ENCODE measurements at regions of chr1 and their contacts with region 1.

Region 1: DNA sequence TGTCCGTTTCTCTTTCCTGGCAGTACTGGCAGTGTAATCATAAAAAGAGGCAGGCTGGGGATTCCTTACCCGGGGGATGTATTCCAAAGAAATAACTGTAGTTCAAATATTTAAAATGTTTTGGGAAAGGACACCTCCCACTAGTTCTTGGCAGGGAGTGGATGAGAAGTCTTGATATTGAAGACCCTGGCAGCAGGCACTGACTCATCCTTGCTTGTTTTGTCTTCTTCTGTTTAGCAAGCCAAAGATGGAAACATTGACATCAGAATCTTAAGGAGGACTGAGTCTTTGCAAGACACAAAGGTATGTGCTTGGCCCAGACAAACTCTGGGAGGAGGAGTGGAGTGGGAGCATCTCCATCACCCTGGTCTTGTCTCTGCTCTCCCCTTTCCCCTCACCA is 639 bp downstream of the IL20 start:
- DNase-seq: no peak
- H3K4me3 ChIP-seq: no peak overlapping the region
- H3K27ac ChIP-seq: no peak overlapping the region
- H3K4me1 ChIP-seq: no peaks in the 10 kb centered on the region
- H3K27me3 ChIP-seq: no peaks in the 10 kb centered on the region
- CTCF ChIP-seq: no peak
- POLR2A ChIP-seq: no peak

Region 2: DNA sequence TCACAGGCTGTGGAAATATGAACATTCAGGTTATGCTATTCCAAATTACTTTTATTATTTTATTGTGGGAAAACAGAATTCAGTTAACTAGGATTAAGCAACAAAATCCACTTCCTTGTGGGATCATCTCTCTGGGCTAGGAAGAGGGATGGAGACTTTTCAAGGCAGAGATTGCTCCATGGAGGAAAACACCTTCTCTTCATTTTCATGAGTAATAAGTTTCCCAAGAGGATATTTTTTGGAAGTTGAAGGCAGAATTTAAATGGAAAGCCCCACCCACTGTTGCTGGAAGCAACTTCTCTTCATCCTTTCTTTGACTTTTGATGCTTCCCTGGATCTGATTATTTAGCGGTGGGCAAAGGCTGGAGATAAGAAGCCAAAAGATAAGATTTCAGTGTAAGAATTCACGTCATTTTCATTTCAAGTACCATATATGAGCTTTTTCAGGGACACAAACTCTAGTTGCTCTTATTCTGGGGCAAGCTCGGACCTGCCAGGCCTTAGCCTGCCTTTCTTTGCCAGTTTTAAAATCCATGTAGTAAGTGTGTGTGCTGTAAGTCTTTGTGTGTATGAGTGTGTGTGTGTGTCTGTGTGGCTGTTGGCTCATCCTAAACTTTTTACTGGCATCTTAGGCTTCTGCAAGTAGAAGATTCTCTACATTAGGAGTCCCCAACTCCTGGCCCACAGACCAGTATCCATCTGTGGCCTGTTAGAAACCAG is 19.4 kb after region 1 on chr1:
- intact Hi-C with region 1: loop called in 1 of 2 experiments (anchors 2 kb)
- DNase-seq: no peak
- H3K4me3 ChIP-seq: no peak overlapping the region
- H3K27ac ChIP-seq: no peak overlapping the region
- H3K4me1 ChIP-seq: no peaks in the 10 kb centered on the region
- H3K27me3 ChIP-seq: peaks cover 6% of the 10 kb centered on the region
- CTCF ChIP-seq: no peak
- POLR2A ChIP-seq: no peak